ENCODE measurements at regions of chr1 and their contacts with region 1.

Region 1: GRCh38 chr1:171485375-171486047 is at the start of gene PRRC2C:
- DNase-seq: peak; percentile 80 to 95 (median 94)
- ATAC-seq: peak; percentile 93
- H3K4me3 ChIP-seq: peak within 1 kb of the TSS; percentile 93
- H3K4me3 Mint-ChIP-seq: peak within 1 kb of the TSS; percentile 83 to 99 (median 96)
- H3K27ac ChIP-seq: peak within 1 kb of the TSS; percentile 99
- H3K27ac Mint-ChIP-seq: peak within 1 kb of the TSS; percentile 92 to 100 (median 97)
- H3K4me1 ChIP-seq: peaks cover 34 to 46% of the 10 kb centered on the region in 2 donors
- H3K4me1 Mint-ChIP-seq: peaks cover 39 to 54% (median 49%) of the 10 kb centered on the region in 7 donors
- H3K27me3 ChIP-seq: no peaks in the 10 kb centered on the region
- H3K27me3 Mint-ChIP-seq: no peaks in the 10 kb centered on the region
- total RNA-seq, gene PRRC2C: 256 to 341 (median 293) TPM

Region 2: GRCh38 chr1:169893494-169894362 is 1591.8 kb before region 1 on chr1 and contains the start of gene SCYL3:
- CTCF ChIA-PET with region 1: interaction called, 3 read pairs
- POLR2A ChIA-PET with region 1: interaction called, 6 read pairs
- intact Hi-C with region 1: loop called (anchors 1 to 5 kb)
- DNase-seq: peak; percentile 85 to 97 (median 95)
- ATAC-seq: peak; percentile 92
- H3K4me3 ChIP-seq: peak within 1 kb of the TSS; percentile 77
- H3K4me3 Mint-ChIP-seq: peak within 1 kb of the TSS; percentile 85 to 97 (median 94)
- H3K27ac ChIP-seq: peak within 1 kb of the TSS; percentile 95
- H3K27ac Mint-ChIP-seq: peak within 1 kb of the TSS; percentile 98 to 100 (median 100)
- H3K4me1 ChIP-seq: peaks cover 25 to 28% of the 10 kb centered on the region in 2 donors
- H3K4me1 Mint-ChIP-seq: peaks cover 26 to 51% (median 46%) of the 10 kb centered on the region in 7 donors
- H3K27me3 ChIP-seq: no peaks in the 10 kb centered on the region
- H3K27me3 Mint-ChIP-seq: peaks cover 0 to 18% (median 4%) of the 10 kb centered on the region in 5 donors
- total RNA-seq, gene SCYL3: 9.5 to 22.7 (median 17.3) TPM

Region 3: GRCh38 chr1:171313835-171314320 is 171.6 kb before region 1 on chr1 and contains the start of gene FMO4:
- CTCF ChIA-PET with region 1: no interaction called
- POLR2A ChIA-PET with region 1: interaction called, 4 read pairs
- intact Hi-C with region 1: loop called (anchors 1 kb)
- DNase-seq: peak; percentile 35 to 94 (median 90)
- ATAC-seq: peak; percentile 100
- H3K4me3 ChIP-seq: peak within 1 kb of the TSS; percentile 26
- H3K4me3 Mint-ChIP-seq: peak within 1 kb of the TSS; percentile 35 to 86 (median 81)
- H3K27ac ChIP-seq: peak within 1 kb of the TSS; percentile 56
- H3K27ac Mint-ChIP-seq: peak within 1 kb of the TSS; percentile 73 to 96 (median 90)
- H3K4me1 ChIP-seq: peaks cover 5 to 7% of the 10 kb centered on the region in 2 donors
- H3K4me1 Mint-ChIP-seq: peaks cover 4 to 34% (median 26%) of the 10 kb centered on the region in 7 donors
- H3K27me3 ChIP-seq: no peaks in the 10 kb centered on the region
- H3K27me3 Mint-ChIP-seq: no peaks in the 10 kb centered on the region
- total RNA-seq, gene FMO4: 1.2 to 3.7 (median 3.3) TPM

Region 4: DNA sequence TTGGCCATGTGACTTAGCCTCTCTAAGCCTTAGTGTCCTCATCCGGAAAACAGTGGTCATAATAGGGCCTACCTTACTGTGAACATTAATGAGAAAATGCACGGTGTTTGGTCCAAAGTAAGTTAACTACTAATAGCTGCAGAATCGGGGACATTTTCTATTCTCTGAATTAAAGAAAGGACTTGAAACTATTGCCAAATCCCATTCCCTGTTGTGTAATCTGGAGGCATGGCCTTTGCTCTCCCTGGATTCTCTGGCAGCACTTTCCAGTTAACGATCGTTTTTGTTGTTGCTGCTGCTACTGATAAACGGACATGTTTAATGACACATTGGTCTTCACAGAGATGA is 141.1 kb before region 1 on chr1:
- CTCF ChIA-PET with region 1: no interaction called
- POLR2A ChIA-PET with region 1: no interaction called
- intact Hi-C with region 1: no loop called
- DNase-seq: no peak
- ATAC-seq: no peak
- H3K4me3 ChIP-seq: no peak overlapping the region
- H3K4me3 Mint-ChIP-seq: no peak overlapping the region
- H3K27ac ChIP-seq: no peak overlapping the region
- H3K27ac Mint-ChIP-seq: no peak overlapping the region
- H3K4me1 ChIP-seq: no peaks in the 10 kb centered on the region
- H3K4me1 Mint-ChIP-seq: no peaks in the 10 kb centered on the region
- H3K27me3 ChIP-seq: no peaks in the 10 kb centered on the region
- H3K27me3 Mint-ChIP-seq: peaks cover 0 to under 1% (median 0%) of the 10 kb centered on the region in 5 donors

Region 5: DNA sequence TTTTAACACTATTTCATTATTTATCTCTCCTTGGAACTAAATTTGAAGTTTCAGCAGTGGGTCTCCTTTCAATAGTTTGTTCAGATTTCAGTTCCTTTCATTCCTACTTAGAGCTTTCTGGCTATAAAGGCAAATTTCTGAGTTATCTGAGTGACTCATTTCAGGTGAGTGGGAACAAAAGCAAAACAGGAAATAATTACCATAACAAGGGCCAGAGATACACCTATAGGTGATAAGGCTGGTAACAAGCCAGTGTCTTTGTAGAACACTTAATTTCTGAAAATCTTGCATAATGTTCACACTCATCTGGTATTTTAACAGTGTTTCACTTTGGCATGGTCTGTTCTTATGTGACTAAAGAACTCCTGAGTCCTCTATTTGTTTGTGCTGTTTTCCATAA is 64.7 kb before region 1 on chr1:
- CTCF ChIA-PET with region 1: no interaction called
- POLR2A ChIA-PET with region 1: no interaction called
- intact Hi-C with region 1: no loop called
- DNase-seq: no peak
- ATAC-seq: peak; percentile 27
- H3K4me3 ChIP-seq: no peak overlapping the region
- H3K4me3 Mint-ChIP-seq: peak overlapping the region in 7 of 10 donors; percentile 2 to 61 (median 31)
- H3K27ac ChIP-seq: no peak overlapping the region
- H3K27ac Mint-ChIP-seq: peak overlapping the region; percentile 3 to 85 (median 50)
- H3K4me1 ChIP-seq: peaks cover 4 to 11% of the 10 kb centered on the region in 2 donors
- H3K4me1 Mint-ChIP-seq: peaks cover 8 to 21% (median 13%) of the 10 kb centered on the region in 7 donors
- H3K27me3 ChIP-seq: no peaks in the 10 kb centered on the region
- H3K27me3 Mint-ChIP-seq: no peaks in the 10 kb centered on the region

Region 6: DNA sequence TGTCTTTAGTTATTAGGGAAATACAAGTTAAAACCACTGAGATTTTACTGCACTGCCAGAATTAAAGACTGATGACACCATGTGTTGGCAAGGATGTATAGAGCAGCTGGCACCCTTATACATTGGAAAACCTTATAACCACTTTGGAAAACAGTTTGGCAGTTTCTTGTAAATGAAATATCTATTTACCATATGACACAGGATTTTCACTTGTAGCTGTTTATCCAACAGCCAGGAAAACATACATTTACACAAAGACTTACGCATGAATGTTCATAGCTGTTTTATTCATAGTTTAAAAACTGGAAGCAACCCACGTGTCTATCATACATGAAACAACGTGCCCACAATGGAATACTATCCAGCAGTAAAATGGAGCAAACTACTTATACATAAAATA is 45.2 kb after region 1 on chr1:
- CTCF ChIA-PET with region 1: no interaction called
- POLR2A ChIA-PET with region 1: interaction called, 9 read pairs
- intact Hi-C with region 1: loop called in 1 of 2 experiments (anchors 5 kb)
- DNase-seq: no peak
- ATAC-seq: no peak
- H3K4me3 ChIP-seq: no peak overlapping the region
- H3K4me3 Mint-ChIP-seq: no peak overlapping the region
- H3K27ac ChIP-seq: no peak overlapping the region
- H3K27ac Mint-ChIP-seq: no peak overlapping the region
- H3K4me1 ChIP-seq: no peaks in the 10 kb centered on the region
- H3K4me1 Mint-ChIP-seq: peaks cover 3 to 18% (median 6%) of the 10 kb centered on the region in 7 donors
- H3K27me3 ChIP-seq: no peaks in the 10 kb centered on the region
- H3K27me3 Mint-ChIP-seq: no peaks in the 10 kb centered on the region

Region 7: GRCh38 chr1:171741872-171742576 is 256.5 kb after region 1 on chr1 and contains the start of gene VAMP4:
- CTCF ChIA-PET with region 1: interaction called, 6 read pairs
- POLR2A ChIA-PET with region 1: interaction called, 19 read pairs
- intact Hi-C with region 1: loop called (anchors 1 kb)
- DNase-seq: peak; percentile 78 to 90 (median 87)
- ATAC-seq: peak; percentile 90
- H3K4me3 ChIP-seq: peak within 1 kb of the TSS; percentile 95
- H3K4me3 Mint-ChIP-seq: peak within 1 kb of the TSS; percentile 97 to 100 (median 99)
- H3K27ac ChIP-seq: peak within 1 kb of the TSS; percentile 95
- H3K27ac Mint-ChIP-seq: peak within 1 kb of the TSS; percentile 98 to 100 (median 100)
- H3K4me1 ChIP-seq: peaks cover 30 to 34% of the 10 kb centered on the region in 2 donors
- H3K4me1 Mint-ChIP-seq: peaks cover 25 to 62% (median 57%) of the 10 kb centered on the region in 7 donors
- H3K27me3 ChIP-seq: no peaks in the 10 kb centered on the region
- H3K27me3 Mint-ChIP-seq: no peaks in the 10 kb centered on the region
- total RNA-seq, gene VAMP4: 16.2 to 27.2 (median 19.7) TPM

Region 8: GRCh38 chr1:172180501-172181285 is 695.2 kb after region 1 on chr1:
- CTCF ChIA-PET with region 1: no interaction called
- POLR2A ChIA-PET with region 1: no interaction called
- intact Hi-C with region 1: loop called in 1 of 2 experiments (anchors 5 kb)
- DNase-seq: peak in 8 of 9 donors; percentile 18 to 50 (median 40)
- ATAC-seq: peak; percentile 72
- H3K4me3 ChIP-seq: peak overlapping the region; percentile 56
- H3K4me3 Mint-ChIP-seq: peak overlapping the region; percentile 61 to 91 (median 82)
- H3K27ac ChIP-seq: peak overlapping the region; percentile 80
- H3K27ac Mint-ChIP-seq: peak overlapping the region; percentile 95 to 99 (median 97)
- H3K4me1 ChIP-seq: peaks cover 21 to 23% of the 10 kb centered on the region in 2 donors
- H3K4me1 Mint-ChIP-seq: peaks cover 26 to 59% (median 45%) of the 10 kb centered on the region in 7 donors
- H3K27me3 ChIP-seq: no peaks in the 10 kb centered on the region
- H3K27me3 Mint-ChIP-seq: no peaks in the 10 kb centered on the region